ENCODE measurements at regions of chr17 and their contacts with region 1.

Region 1: GRCh38 chr17:75572735-75573539 is 14.7 kb upstream of the MYO15B start:
- DNase-seq: no peak
- ATAC-seq: no peak
- H3K4me3 ChIP-seq: no peak overlapping the region
- H3K27ac ChIP-seq: no peak overlapping the region
- H3K4me1 ChIP-seq: peaks cover 25% of the 10 kb centered on the region
- H3K27me3 ChIP-seq: no peaks in the 10 kb centered on the region
- CTCF ChIP-seq: no peak
- EP300 ChIP-seq: no peak
- POLR2A ChIP-seq: no peak
- RAD21 ChIP-seq: no peak

Region 2: DNA sequence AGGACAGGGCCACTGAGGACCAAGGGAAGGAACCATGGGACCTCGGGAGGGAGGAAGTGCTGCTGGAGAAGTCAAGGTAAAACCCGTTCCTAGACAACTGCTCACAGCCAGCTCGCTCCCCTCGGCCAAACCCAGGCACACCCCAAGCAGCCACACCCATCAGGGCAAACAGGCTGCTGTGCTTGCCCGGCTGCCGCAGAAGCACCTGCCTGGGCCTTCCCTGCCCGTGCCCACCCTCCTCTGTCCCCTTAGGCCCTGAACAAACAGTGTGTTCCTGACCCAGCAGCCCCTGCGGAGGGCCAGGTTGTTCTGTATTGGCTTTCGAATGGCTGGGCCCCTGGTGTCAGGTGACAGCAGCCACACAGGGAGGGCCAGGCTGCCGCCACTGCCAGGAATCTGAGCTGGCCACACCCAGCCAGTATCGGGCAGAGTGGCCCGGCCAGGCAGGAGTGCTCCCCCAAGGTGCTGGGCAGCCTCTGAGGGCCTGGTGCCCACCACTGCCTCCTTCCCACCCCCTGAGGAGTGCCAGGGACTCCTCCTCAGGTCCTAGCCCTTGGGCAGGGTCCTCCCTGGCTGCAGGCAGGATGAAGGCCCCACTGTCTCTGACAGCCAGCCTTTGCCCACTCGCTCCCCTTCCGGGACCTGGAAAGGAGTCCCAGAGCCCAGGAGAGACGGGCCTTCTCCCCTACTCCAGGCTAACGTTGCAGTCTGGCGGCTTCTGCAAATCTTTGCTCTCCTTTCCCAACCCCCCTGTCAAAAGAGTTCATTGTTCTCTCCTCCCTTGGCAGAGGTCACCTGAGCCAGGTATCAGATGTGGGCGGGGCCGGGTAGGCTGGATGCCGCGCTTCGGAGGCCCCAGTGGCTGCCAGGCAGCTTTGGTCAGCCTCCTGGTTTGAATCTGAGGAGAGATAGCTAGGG is 23.5 kb before region 1 on chr17:
- CTCF ChIA-PET with region 1: no interaction called
- POLR2A ChIA-PET with region 1: interaction called, 11 read pairs
- in situ Hi-C with region 1: no loop called
- intact Hi-C with region 1: no loop called
- DNase-seq: peak; percentile 89
- ATAC-seq: peak; percentile 88
- H3K4me3 ChIP-seq: peak overlapping the region; percentile 43 to 72 (median 55); a peak in 5 of 6 replicates
- H3K27ac ChIP-seq: peak overlapping the region; percentile 66
- H3K4me1 ChIP-seq: peaks cover 59% of the 10 kb centered on the region
- H3K27me3 ChIP-seq: no peaks in the 10 kb centered on the region
- CTCF ChIP-seq: peak; percentile 44
- EP300 ChIP-seq: peak in 1 of 2 experiments; percentile 43; a peak in 2 of 4 replicates
- POLR2A ChIP-seq: peak; percentile 59 to 88; a peak in 3 of 4 replicates
- RAD21 ChIP-seq: 0 out of 2 replicates have a peak, but pooled peaks have one; percentile 13

Region 3: GRCh38 chr17:75557075-75557882 is 15.7 kb before region 1 on chr17:
- CTCF ChIA-PET with region 1: no interaction called
- POLR2A ChIA-PET with region 1: interaction called, 39 read pairs
- in situ Hi-C with region 1: no loop called
- intact Hi-C with region 1: loop called (anchors 2 kb)
- DNase-seq: peak; percentile 98
- ATAC-seq: peak; percentile 89
- H3K4me3 ChIP-seq: peak overlapping the region; percentile 32 to 69 (median 39)
- H3K27ac ChIP-seq: peak overlapping the region; percentile 81
- H3K4me1 ChIP-seq: peaks cover 90% of the 10 kb centered on the region
- H3K27me3 ChIP-seq: no peaks in the 10 kb centered on the region
- CTCF ChIP-seq: peak; percentile 50
- EP300 ChIP-seq: peak in 1 of 2 experiments; percentile 80; a peak in 2 of 4 replicates
- POLR2A ChIP-seq: peak; percentile 50 to 81; a peak in 3 of 4 replicates
- RAD21 ChIP-seq: peak; percentile 62